Psoas muscle (tissue), 8 donors: ENCODE measurements at regions of chr4 and their contacts with region 1.

Region 1: DNA sequence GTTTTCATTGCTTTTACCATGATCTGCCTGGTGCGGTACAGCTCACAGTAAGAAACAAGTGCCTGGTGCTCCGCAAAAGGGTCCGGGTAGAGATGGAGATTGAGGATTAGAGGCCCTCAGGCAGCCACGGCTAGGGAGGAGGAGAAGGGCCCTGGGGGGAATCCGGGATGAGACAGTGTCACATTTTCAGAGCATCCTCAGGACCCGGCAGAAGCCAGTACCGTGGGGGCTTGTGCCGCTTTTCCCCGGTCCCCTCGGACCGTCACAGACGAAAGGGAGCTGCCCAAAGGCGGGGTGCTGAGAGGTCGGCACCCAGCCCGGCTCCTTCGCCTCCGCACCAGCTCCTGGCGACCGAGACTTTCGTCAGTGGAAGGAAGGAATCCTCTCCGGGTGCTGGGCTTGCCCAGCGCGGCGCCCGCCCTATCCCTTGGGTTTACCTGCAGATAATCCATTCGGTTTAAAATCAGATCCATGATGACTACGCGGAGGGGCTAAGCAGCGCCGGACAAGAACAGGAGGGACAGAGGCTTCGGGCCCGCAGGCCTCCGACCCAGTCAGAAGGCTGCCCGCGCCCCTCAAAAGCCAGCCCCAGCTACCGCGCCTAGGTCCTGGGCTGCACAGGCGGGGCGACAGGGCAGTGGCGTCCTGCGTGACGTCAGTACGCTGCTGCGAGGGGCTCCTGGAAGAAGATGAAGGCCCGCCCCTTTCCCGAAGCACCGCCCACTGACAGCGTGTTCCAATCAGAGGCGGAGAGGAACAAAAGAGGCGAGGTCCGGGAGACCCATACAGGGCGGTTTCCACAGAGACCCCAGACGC is at the start of gene BBS7:
- DNase-seq: peak; percentile 97 to 98
- ATAC-seq: peak; percentile 99 to 100 (median 100)
- H3K4me3 ChIP-seq: peak within 1 kb of the TSS; percentile 89
- H3K27ac ChIP-seq: peak within 1 kb of the TSS; percentile 75
- H3K4me1 ChIP-seq: peaks cover 8% of the 10 kb centered on the region
- H3K27me3 ChIP-seq: no peaks in the 10 kb centered on the region
- CTCF ChIP-seq: no peak
- total RNA-seq, gene BBS7: 4.5 to 10.3 (median 5.0) TPM

Region 2: DNA sequence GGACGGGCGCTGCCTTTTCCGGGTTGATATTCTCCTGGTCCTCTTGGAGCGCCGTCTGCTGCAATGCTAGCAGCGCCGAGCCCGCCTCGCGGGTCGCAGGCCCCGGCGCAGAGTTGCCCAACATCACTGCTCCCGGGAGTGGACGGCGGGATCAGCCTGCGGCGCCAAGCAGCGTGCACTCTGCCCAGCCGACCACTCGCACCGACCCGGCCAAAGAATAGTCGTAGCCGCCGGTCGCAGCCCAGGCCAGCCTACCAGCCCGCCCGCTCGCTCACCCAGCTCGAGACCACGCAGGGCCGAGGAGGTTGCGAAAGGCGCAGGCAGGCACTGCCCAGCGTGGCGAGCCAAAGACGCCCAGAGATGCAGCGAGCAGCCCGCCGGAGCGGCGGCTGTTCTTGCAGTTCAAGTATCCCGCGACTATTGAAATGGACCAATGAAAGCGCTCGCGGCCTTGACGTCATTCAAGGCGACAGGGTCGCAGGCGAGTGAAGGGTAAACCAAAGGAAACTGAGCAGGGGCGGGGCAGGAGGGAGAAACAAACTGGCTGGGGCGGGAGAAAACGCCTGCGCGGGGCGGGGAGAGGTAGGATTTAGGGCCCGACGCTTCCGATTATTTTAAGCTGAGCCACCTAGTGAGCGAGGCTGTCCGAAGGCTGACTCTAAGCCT is 46.4 kb before region 1 on chr4 and contains the start of gene CCNA2:
- intact Hi-C with region 1: loop called (anchors 5 kb)
- DNase-seq: peak; percentile 96 to 97
- ATAC-seq: peak; percentile 100
- H3K4me3 ChIP-seq: peak within 1 kb of the TSS; percentile 72
- H3K27ac ChIP-seq: peak within 1 kb of the TSS; percentile 78
- H3K4me1 ChIP-seq: peaks cover 8% of the 10 kb centered on the region
- H3K27me3 ChIP-seq: no peaks in the 10 kb centered on the region
- CTCF ChIP-seq: no peak
- total RNA-seq, gene CCNA2: 0.18 to 0.46 (median 0.34) TPM